Right ventricle myocardium inferior (tissue), 1 donor: ENCODE measurements at regions of chr18 and their contacts with region 1.

Region 1: GRCh38 chr18:62714671-62715435 is 488 bp upstream of the PHLPP1 start:
- DNase-seq: peak; percentile 100
- ATAC-seq: peak; percentile 99

Region 2: DNA sequence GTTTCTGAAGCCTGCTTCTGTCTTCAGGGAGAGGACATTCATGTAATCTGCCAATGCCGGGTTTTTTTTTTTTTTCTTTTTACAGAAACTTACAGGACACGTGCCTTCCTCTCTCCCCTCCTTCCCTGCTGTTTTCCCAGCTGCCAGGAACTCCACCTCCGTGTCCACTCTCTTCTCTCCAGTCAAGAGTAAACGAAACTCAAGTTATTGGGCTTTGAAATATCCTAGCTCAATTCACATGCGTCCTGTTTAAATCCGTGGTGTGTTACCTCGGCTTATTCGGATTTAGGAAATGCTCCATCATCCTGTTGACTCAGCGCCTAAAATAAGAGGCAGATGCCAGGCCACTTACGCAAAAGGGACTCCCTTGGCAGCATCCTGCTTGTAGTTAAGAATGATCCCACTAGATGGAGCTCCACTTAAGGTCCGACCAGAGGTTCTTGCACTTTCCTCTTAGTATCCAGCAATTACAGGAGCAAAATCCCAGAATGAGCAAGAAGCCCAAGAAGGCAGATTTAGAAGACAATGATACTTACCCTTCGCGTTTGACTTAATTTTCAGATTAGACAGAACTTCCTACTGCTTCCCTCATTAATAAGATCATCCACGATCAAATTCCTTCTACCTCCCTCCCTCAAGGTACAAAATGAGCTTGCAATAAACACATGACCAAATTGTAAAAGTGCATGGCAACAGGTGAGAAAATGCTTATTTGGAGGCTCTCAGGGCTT is 289.2 kb before region 1 on chr18:
- intact Hi-C with region 1: loop called (anchors 1 kb)
- DNase-seq: no peak
- ATAC-seq: peak; percentile 93

Region 3: DNA sequence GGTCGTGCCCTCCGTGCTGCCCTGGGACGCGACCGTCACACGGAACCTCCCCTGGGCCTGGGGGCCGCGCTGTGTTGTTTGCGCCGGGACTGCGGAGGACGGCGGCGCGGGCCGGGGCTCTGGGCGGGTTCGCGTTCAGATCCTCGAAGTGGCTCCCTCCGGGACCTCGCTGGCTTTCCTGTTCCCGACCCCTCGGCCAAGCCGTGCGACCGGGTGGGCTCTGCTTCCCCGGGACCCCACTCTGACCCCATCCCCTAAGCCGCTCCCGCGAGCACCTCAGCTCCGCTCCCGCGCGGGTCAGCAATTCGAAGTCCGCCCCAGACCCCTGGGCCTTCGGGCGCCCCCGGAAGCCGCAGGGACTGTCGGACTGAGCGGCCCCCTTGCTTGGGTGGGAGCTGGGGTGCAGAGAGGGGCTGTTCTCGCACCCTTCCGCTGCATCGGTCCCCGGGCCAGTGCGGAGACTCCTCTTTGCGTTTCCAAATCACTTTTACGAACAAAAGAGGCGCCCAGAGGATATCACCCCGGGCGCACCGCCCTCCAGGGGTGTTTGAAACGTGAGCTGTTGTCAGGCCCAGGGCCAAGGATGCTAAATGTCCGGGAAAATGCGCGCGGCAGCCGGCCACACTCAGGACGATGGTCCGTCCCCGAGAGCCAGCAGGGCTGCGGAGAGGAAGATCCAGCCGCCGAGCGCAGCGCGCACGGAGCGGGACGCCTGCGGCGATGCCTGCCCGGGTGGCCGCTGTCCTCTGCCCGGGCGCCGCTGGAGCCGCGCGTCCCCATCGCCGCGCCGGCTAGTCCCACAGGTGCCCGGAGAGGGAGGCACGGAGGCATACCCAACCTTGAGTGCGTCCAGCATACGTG is 118.5 kb before region 1 on chr18:
- intact Hi-C with region 1: no loop called
- DNase-seq: no peak
- ATAC-seq: peak; percentile 62

Region 4: GRCh38 chr18:62784966-62785413 is 70.1 kb after region 1 on chr18:
- intact Hi-C with region 1: loop called (anchors 5 kb)
- DNase-seq: no peak
- ATAC-seq: peak; percentile 65

Region 5: DNA sequence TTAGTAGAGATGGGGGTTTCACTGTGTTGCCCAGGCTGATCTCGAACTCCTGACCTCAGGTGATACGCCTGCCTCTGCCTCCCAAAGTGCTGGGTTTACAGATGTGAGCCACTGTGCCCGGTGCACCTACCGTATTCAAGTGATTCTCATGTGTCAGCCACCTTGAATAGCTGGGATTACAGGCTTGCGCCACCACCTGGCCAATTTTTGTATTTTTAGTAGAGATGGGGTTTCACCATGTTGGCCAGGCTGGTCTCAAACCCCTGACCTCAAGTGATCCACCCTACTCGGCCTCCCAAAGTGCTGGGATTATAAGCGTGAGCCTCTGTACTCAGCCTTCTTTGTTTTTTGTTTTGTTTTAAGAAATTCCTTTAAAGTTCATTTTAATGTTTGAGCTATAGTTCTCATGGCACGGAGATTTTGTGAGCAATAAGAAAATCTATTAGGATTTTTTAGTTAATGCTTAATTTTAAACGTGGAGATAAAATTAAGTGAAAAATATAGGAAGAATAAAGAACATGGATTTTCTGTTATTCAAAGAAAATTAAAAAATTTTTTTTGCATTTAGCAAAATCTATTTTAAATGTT is 243.1 kb after region 1 on chr18:
- intact Hi-C with region 1: loop called (anchors 5 kb)
- DNase-seq: no peak
- ATAC-seq: no peak

Region 6: GRCh38 chr18:63422087-63422809 is 707.4 kb after region 1 on chr18 and contains the start of gene VPS4B:
- intact Hi-C with region 1: loop called (anchors 10 kb)
- DNase-seq: peak; percentile 100
- ATAC-seq: peak; percentile 99
- total RNA-seq, gene VPS4B: 20.4 TPM

Region 7: DNA sequence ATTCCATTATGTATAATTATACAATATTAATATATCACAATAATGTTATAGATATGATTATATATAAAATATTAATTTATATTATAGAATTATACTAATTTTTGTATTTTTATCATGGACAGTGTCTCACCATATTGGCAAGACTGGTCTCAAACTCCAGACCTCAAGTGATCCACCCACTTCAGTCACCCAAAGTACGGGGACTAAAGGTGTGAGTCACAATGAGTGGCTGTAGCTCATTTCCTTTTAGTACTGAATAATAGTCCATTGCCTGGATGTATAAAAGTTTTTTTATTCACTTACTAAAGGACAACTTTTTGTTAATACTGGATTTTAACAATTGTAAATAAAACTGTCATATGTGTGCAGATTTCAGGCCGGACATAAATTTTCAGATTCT is 1851.6 kb after region 1 on chr18:
- intact Hi-C with region 1: no loop called
- DNase-seq: no peak
- ATAC-seq: no peak